Activated CD8-positive, alpha-beta T cell treated with anti-CD3 and anti-CD28 coated beads for 36 hours (primary cell): ENCODE measurements at regions of chr2 and their contacts with region 1.

Region 1: DNA sequence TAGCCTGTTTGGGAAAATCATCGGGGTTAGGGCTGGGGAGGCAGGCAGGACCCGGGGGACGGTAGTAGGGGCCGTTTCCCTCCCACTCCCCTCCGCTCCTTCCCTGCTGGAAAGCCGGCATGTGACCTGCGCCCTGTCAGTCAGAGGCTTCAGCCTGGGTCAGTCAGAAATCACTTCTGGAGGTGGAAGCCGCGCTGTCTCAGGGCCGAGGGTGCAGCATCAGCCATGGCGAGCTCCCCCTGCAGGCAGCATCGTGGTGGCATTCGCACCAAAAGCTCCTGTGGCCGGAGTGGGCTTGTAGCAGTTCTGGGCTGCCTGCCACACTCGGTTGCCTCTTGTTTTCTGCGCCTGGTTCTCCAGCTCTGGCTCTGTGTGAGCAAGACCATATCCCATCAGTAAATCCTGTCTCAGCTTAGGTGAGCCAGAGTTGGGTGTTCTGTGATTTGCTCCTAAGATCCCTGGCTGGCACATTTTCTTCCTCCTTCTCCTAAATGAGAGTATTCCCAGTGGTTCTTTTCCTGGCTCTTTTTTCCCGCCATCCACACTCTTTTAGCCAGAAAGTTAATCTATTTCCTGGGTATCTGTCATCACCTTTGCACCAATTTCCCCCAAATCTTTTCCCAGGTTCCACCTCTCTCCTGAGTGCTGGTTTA is 123.9 kb upstream of the CD302 start:
- DNase-seq: peak; percentile 91
- ATAC-seq: peak; percentile 88
- H3K4me3 Mint-ChIP-seq: no peak overlapping the region
- H3K27ac Mint-ChIP-seq: peak overlapping the region; percentile 18
- H3K4me1 Mint-ChIP-seq: peaks cover 24% of the 10 kb centered on the region
- H3K27me3 Mint-ChIP-seq: peaks cover 23% of the 10 kb centered on the region
- CTCF ChIP-seq: peak; percentile 64

Region 2: GRCh38 chr2:159879051-159879604 is 42.8 kb before region 1 on chr2:
- CTCF ChIA-PET with region 1: interaction called, 4 read pairs
- POLR2A ChIA-PET with region 1: no interaction called
- intact Hi-C with region 1: loop called (anchors 5 kb)
- DNase-seq: peak; percentile 60
- ATAC-seq: peak; percentile 86
- H3K4me3 Mint-ChIP-seq: no peak overlapping the region
- H3K27ac Mint-ChIP-seq: peak overlapping the region; percentile 89
- H3K4me1 Mint-ChIP-seq: peaks cover 29% of the 10 kb centered on the region
- H3K27me3 Mint-ChIP-seq: no peaks in the 10 kb centered on the region
- CTCF ChIP-seq: no peak